ENCODE measurements at regions of chr5 and their contacts with region 1.

Region 1: GRCh38 chr5:96997265-96997859 is 61.5 kb downstream of the LNPEP start:
- DNase-seq: no peak
- H3K4me3 ChIP-seq: no peak overlapping the region
- CTCF ChIP-seq: peak; percentile 45

Region 2: DNA sequence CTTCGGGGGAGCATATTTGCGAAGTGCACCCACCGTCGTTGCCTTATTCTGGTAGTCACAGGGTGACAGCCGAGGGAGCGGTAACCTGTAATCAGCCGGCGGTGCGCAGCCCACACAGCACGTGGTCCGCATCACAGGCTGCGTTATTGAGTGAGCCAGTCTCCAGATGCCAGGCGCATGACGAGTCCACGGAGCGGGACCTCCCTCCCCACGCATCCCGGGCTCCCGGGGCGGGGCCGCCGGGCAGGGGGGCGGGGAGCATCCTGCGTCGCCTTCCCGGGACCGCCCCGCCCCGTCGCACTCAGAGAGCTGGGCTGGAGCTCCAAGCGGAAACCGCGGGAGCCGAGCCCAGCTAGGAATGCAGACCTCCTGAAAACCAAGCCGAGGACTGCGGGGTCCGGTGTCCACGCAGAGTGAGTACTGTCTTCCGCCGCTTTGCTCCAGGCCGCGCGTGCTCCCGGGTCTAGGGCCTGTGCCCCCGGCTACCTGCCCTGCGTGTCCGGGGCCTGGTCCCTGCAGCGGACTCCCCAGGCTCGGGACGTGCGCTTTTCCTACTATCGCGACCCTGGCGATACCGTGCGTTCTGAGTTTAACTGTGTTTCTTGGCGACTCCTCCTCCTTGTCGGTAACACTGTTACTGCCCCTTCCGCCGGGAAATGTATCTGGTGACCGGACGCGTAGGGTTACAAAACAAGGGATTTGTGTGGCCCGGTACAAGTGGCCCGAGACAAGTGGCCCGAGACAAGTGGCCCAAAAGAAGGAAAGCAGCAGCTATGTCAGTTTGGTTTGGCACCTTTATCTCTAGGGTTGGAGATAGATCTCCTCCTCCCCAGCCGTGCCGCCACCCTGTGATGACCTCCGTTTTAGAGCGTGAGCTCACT is 294.6 kb before region 1 on chr5:
- CTCF ChIA-PET with region 1: no interaction called
- POLR2A ChIA-PET with region 1: no interaction called
- DNase-seq: no peak
- H3K4me3 ChIP-seq: peak overlapping the region; percentile 84
- CTCF ChIP-seq: no peak

Region 3: GRCh38 chr5:96978812-96979449 is 18.4 kb before region 1 on chr5:
- CTCF ChIA-PET with region 1: interaction called, 16 read pairs
- POLR2A ChIA-PET with region 1: no interaction called
- DNase-seq: no peak
- H3K4me3 ChIP-seq: no peak overlapping the region
- CTCF ChIP-seq: no peak

Region 4: GRCh38 chr5:96984506-96985192 is 12.7 kb before region 1 on chr5:
- CTCF ChIA-PET with region 1: interaction called, 29 read pairs
- POLR2A ChIA-PET with region 1: no interaction called
- DNase-seq: no peak
- H3K4me3 ChIP-seq: no peak overlapping the region
- CTCF ChIP-seq: no peak

Region 5: GRCh38 chr5:97009212-97009898 is 12.0 kb after region 1 on chr5:
- CTCF ChIA-PET with region 1: interaction called, 20 read pairs
- POLR2A ChIA-PET with region 1: no interaction called
- DNase-seq: no peak
- H3K4me3 ChIP-seq: no peak overlapping the region
- CTCF ChIP-seq: no peak

Region 6: DNA sequence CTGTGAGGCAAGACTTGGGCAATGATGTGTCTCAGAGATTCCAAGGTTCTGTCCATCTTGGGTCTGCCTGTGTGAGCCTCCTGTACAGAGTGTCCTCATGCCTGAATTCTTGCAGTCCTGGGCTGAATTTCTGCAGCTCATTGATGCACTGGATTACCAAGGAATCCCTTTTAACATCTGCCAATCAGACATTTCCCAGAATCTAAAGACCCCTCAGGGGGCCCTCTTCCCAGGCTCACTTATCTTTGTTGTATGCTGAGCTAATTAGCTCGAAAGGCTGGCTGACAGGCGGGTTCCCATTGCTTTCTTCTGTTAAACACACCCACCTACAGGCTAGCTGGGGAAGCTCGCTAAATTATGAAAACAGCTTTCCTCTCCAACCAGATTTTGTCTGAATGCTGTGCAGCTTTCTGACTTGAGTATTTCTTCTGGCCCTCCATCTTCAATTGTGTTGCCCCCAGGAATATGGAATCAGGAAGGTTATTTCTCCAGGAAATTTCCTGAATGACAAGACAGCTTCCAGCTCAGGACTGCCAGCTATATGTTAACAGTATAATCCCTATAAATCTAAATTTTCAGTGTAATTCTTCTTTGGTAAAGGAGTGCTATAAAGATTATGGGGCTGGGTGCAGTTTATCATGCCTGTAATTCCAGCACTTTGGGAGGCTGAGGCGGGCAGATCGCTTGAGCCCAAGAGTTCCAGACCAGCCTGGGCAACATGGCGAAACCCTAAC is 145.3 kb after region 1 on chr5 and contains the start of gene LIX1:
- CTCF ChIA-PET with region 1: interaction called, 23 read pairs
- POLR2A ChIA-PET with region 1: no interaction called
- DNase-seq: no peak
- H3K4me3 ChIP-seq: no peak within 1 kb of the TSS
- CTCF ChIP-seq: peak; percentile 40

Measured in AG04449 (cell line).